ENCODE measurements at regions of chr6 and their contacts with region 1.

Region 1: GRCh38 chr6:56364827-56365313 is 117.5 kb upstream of the COL21A1 start:
- DNase-seq: no peak
- H3K4me3 ChIP-seq: no peak overlapping the region
- H3K4me3 Mint-ChIP-seq: no peak overlapping the region
- H3K27ac ChIP-seq: no peak overlapping the region
- H3K27ac Mint-ChIP-seq: no peak overlapping the region
- H3K4me1 ChIP-seq: peaks cover 0 to 5% of the 10 kb centered on the region in 2 donors
- H3K4me1 Mint-ChIP-seq: peaks cover 22% of the 10 kb centered on the region
- H3K27me3 ChIP-seq: no peaks in the 10 kb centered on the region
- H3K27me3 Mint-ChIP-seq: peaks cover 0 to 4% (median 3%) of the 10 kb centered on the region in 3 donors
- CTCF ChIP-seq: no peak

Region 2: GRCh38 chr6:56595490-56596122 is 230.7 kb after region 1 on chr6:
- intact Hi-C with region 1: loop called (anchors 2 to 10 kb)
- DNase-seq: peak; percentile 69 to 87 (median 82)
- H3K4me3 ChIP-seq: no peak overlapping the region
- H3K4me3 Mint-ChIP-seq: no peak overlapping the region
- H3K27ac ChIP-seq: peak overlapping the region in 1 of 2 donors; percentile 73
- H3K27ac Mint-ChIP-seq: peak overlapping the region in 5 of 7 donors; percentile 50 to 89 (median 68)
- H3K4me1 ChIP-seq: peaks cover 28 to 33% of the 10 kb centered on the region in 2 donors
- H3K4me1 Mint-ChIP-seq: peaks cover 29% of the 10 kb centered on the region
- H3K27me3 ChIP-seq: no peaks in the 10 kb centered on the region
- H3K27me3 Mint-ChIP-seq: no peaks in the 10 kb centered on the region
- CTCF ChIP-seq: peak; percentile 81

Region 3: GRCh38 chr6:56730663-56731529 is 366.0 kb after region 1 on chr6:
- intact Hi-C with region 1: no loop called
- DNase-seq: no peak
- H3K4me3 ChIP-seq: no peak overlapping the region
- H3K4me3 Mint-ChIP-seq: no peak overlapping the region
- H3K27ac ChIP-seq: no peak overlapping the region
- H3K27ac Mint-ChIP-seq: no peak overlapping the region
- H3K4me1 ChIP-seq: peaks cover 8% of the 10 kb centered on the region in 2 donors
- H3K4me1 Mint-ChIP-seq: peaks cover 18% of the 10 kb centered on the region
- H3K27me3 ChIP-seq: no peaks in the 10 kb centered on the region
- H3K27me3 Mint-ChIP-seq: no peaks in the 10 kb centered on the region
- CTCF ChIP-seq: no peak

Region 4: DNA sequence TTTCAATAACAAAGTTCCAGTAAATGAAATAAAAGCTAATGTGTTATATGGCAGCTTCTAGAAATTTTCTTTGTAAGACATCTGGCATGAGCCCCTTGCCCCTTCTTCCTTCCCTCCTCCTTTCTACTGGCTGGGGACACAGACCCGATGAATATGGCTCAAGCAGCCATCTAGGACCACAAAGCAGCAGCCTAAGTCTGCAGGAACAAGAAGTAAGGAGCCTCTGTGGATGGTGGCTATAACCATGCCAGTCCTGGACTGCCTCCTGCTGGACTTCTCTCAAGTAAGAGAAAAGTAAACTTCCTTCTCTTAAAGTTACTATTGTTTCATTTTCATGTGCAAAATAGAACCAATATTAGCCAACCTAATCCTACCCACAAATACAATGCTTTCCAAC is 392.7 kb after region 1 on chr6:
- intact Hi-C with region 1: loop called in 1 of 2 experiments (anchors 10 kb)
- DNase-seq: peak; percentile 48 to 68 (median 63)
- H3K4me3 ChIP-seq: no peak overlapping the region
- H3K4me3 Mint-ChIP-seq: no peak overlapping the region
- H3K27ac ChIP-seq: no peak overlapping the region
- H3K27ac Mint-ChIP-seq: peak overlapping the region in 1 of 7 donors; percentile 23
- H3K4me1 ChIP-seq: peaks cover 0 to 8% of the 10 kb centered on the region in 2 donors
- H3K4me1 Mint-ChIP-seq: peaks cover 21% of the 10 kb centered on the region
- H3K27me3 ChIP-seq: no peaks in the 10 kb centered on the region
- H3K27me3 Mint-ChIP-seq: no peaks in the 10 kb centered on the region
- CTCF ChIP-seq: peak; percentile 67

Region 5: DNA sequence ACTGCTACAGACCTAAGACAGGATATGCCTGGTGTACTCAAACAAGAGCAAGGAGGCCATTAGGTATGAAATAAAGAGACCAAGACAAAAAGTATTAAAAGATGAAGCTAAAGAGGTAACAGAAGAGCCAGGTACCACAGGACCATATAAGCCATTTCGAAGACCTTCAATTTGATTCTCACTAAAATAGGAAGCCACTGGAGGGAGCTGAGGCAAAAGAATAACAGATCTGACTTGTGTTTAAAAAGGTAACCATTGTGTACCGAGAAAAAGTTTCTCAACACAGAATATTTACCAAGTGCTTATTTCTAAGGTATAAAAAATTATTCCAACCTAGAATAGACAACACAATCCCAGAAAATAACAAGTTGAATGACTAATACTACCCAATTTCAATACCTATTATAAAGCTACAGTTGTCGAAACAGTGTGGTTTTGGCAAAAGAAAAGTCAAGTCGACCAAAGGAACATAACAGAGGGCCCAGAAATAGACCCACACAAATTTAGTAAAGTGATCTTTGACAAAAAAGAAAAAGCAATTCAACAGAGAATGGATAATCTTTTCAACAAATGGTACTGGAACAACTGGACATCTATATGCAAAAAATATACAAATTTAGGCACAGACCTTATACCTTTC is 403.1 kb after region 1 on chr6:
- intact Hi-C with region 1: no loop called
- DNase-seq: no peak
- H3K4me3 ChIP-seq: no peak overlapping the region
- H3K4me3 Mint-ChIP-seq: no peak overlapping the region
- H3K27ac ChIP-seq: no peak overlapping the region
- H3K27ac Mint-ChIP-seq: no peak overlapping the region
- H3K4me1 ChIP-seq: peaks cover 0 to 3% of the 10 kb centered on the region in 2 donors
- H3K4me1 Mint-ChIP-seq: peaks cover 10% of the 10 kb centered on the region
- H3K27me3 ChIP-seq: no peaks in the 10 kb centered on the region
- H3K27me3 Mint-ChIP-seq: peaks cover 0 to 2% (median 0%) of the 10 kb centered on the region in 3 donors
- CTCF ChIP-seq: no peak

Region 6: DNA sequence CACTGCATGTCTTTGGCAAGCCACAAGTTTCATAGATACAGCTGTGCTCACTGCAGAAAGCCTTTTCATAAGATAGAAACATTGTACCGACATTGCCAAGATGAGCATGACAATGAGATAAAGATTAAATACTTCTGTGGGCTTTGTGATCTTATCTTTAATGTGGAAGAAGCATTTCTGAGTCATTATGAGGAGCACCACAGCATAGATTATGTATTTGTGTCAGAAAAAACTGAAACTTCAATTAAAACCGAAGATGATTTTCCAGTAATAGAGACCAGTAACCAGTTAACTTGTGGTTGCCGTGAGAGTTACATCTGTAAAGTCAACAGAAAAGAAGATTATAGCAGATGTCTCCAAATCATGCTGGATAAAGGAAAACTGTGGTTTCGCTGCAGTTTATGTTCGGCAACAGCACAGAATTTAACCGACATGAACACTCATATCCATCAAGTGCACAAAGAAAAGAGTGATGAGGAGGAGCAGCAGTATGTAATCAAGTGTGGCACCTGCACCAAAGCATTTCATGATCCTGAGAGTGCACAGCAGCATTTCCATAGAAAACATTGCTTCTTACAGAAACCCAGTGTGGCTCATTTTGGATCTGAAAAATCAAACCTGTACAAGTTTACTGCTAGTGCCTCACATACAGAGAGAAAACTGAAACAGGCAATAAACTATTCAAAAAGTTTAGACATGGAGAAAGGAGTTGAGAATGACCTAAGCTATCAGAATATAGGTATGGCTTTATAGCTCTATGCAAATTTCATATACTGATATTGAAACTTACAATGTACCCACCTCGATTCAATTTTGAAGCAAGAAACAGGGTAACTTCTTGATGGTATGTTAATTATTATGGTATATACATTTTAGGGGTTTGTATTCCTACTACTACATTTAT is 783.3 kb after region 1 on chr6:
- intact Hi-C with region 1: no loop called
- DNase-seq: no peak
- H3K4me3 ChIP-seq: no peak overlapping the region
- H3K4me3 Mint-ChIP-seq: no peak overlapping the region
- H3K27ac ChIP-seq: no peak overlapping the region
- H3K27ac Mint-ChIP-seq: no peak overlapping the region
- H3K4me1 ChIP-seq: no peaks in the 10 kb centered on the region
- H3K4me1 Mint-ChIP-seq: no peaks in the 10 kb centered on the region
- H3K27me3 ChIP-seq: no peaks in the 10 kb centered on the region
- H3K27me3 Mint-ChIP-seq: no peaks in the 10 kb centered on the region
- CTCF ChIP-seq: no peak

Measured in CD14-positive monocyte (primary cell).